GM10248 (cell line): ENCODE measurements at regions of chr5 and their contacts with region 1.

Region 1: DNA sequence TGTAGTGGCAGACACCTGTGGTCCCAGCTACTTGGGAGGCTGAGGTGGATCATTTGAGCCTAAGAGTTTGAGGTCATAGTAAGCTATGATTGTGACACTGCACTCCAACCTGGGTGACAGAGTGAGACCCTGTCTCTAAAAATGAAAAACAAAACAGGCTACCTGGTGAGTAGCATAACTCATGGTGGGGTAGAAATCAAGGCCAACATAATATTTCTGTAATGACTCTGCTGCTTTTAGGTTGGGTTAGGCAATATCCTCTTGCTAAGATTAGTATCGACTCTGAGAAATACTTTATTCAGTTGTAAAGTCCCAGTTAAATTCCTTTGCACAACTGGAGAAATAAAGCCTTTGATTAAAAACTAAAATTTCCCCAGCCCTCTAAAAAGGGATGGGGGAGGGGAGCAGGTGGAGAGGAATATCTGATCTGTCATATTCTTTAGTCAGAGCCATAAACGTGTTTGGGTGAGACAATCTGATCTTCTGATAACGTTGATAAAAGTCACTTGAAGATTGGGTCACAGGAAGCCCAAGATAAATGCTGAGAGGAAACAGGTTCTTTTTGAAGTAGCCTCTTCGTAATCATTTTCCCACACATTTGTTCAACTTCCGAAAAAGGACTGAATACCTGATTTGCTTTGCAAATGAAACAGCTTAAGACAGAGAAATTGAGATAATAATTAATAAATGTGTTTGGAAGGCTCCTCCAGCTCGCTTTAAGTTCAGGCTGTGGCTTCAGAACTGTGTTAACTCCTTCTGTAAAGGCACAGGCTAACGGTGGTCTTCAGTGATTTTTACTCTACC is 14.9 kb downstream of the IL4 start:
- DNase-seq: peak; percentile 38
- CTCF ChIP-seq: no peak

Region 2: DNA sequence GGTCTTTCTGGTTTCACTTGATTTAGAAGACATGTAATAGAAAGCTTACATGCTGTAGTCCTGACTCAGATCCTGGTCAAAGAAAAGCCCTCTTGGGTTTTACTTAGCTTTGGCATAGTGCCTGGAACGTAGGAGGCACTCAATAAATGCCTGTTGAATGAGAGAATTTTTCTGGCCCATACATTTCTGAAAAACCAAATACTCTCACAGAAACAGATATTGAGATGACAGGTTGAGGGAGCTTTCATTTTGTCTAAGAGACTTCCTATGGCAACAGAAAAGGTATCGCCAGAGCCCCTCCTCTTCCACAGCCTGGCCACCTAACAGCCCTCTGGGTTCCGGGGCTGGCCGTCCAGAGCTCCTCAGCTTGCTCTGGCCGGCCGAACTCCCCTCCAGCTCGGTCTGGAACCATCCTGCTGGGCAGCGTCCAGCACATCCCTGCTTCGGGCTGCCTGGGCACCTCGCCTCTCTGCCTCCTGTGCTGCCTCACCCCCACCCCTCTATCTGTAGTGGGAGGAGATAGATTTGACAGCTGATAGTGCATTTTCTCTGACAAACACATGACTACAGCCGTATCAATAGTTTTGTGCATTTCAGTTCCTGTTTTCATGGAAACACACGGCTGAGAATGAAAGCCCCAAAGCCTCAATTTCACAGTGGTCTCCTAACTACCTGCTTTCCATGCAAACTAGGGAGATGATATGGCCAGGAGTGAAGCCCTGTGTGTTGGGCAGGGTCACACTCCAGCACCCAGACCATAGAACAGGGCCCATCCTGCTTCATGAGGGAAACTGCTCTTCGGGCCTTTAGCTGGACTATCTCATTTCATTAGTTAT is 13.8 kb before region 1 on chr5:
- CTCF ChIA-PET with region 1: interaction called, 13 read pairs
- POLR2A ChIA-PET with region 1: interaction called, 6 read pairs
- DNase-seq: peak; percentile 84
- CTCF ChIP-seq: no peak

Region 3: GRCh38 chr5:132708645-132709044 is 19.9 kb after region 1 on chr5:
- CTCF ChIA-PET with region 1: interaction called, 10 read pairs
- POLR2A ChIA-PET with region 1: no interaction called
- DNase-seq: no peak
- CTCF ChIP-seq: no peak